ENCODE measurements at regions of chr3 and their contacts with region 1.

Region 1: DNA sequence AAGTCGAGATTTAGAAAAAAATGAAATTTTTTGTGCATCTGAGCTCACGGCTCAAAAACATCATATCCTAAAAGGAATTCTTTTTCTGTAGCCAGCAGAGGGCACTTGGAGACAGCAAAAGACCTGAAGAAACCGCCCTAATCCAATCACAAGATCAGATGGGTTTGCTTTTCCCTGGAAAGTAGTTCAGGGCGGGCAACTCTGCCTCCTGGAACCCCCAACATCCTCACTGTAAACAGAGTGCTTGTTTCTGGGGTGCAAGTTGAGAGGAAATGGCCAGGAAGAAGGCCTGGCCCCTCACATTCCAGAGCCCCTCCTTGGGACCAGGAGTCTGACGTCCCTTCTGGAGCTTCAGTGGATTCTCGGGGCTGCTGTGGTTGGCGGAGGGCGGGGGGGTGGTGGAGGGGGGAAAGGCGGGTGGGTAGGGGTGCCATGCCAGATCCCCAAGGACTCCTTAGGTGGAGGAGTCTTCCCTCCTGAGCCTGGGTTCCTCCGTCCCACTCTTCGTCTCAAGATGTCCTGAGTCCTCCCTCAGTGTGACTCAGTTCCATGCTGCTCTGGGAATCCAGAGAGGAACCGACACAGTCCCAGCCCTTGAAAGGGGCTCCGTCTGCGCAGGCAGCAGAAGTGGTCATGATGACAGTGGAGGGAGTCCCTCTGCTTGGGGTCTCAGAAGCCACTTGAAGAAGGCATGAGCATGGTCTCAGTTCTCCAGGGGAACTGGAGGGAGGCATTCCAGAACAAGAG is 35.9 kb downstream of the CCK start:
- DNase-seq: no peak
- ATAC-seq: peak; percentile 41 to 72 (median 48)
- H3K4me3 ChIP-seq: no peak overlapping the region
- H3K27ac ChIP-seq: no peak overlapping the region
- H3K4me1 ChIP-seq: peaks cover 4% of the 10 kb centered on the region
- H3K27me3 ChIP-seq: peaks cover 0 to 6% (median 0%) of the 10 kb centered on the region in 3 donors
- CTCF ChIP-seq: peak; percentile 55

Region 2: GRCh38 chr3:41404582-41404981 is 825.5 kb before region 1 on chr3:
- intact Hi-C with region 1: no loop called
- DNase-seq: no peak
- ATAC-seq: no peak
- H3K4me3 ChIP-seq: no peak overlapping the region
- H3K27ac ChIP-seq: no peak overlapping the region
- H3K4me1 ChIP-seq: no peaks in the 10 kb centered on the region
- H3K27me3 ChIP-seq: no peaks in the 10 kb centered on the region
- CTCF ChIP-seq: no peak

Region 3: DNA sequence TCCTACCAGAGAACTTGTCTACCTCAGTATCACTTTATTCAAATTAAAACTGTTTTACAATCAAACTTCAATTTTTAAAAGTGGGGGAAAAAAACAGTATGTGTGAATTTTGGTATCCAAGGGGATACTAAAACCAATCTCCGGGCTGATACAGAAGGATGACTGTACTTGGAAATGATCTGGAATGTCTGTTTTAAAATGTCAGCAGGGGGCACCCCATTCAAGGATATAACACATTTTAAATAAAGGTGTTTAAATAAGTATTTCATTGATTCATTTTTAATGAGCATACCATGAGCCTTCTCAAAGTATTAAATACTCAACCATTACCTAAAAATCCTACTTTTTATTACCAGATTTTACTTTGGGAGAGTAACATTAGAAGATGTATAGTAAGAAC is 336.1 kb before region 1 on chr3:
- intact Hi-C with region 1: loop called in 1 of 2 experiments (anchors 10 kb)
- DNase-seq: no peak
- ATAC-seq: peak in 1 of 4 donors; percentile 59
- H3K4me3 ChIP-seq: no peak overlapping the region
- H3K27ac ChIP-seq: no peak overlapping the region
- H3K4me1 ChIP-seq: no peaks in the 10 kb centered on the region
- H3K27me3 ChIP-seq: no peaks in the 10 kb centered on the region
- CTCF ChIP-seq: peak; percentile 60

Region 4: GRCh38 chr3:42539869-42540714 is 310.0 kb after region 1 on chr3:
- intact Hi-C with region 1: loop called (anchors 5 kb)
- DNase-seq: no peak
- ATAC-seq: peak; percentile 51 to 75 (median 64)
- H3K4me3 ChIP-seq: no peak overlapping the region
- H3K27ac ChIP-seq: no peak overlapping the region
- H3K4me1 ChIP-seq: no peaks in the 10 kb centered on the region
- H3K27me3 ChIP-seq: no peaks in the 10 kb centered on the region
- CTCF ChIP-seq: peak; percentile 62

Measured in psoas muscle (tissue), 8 donors.